Aorta (tissue), 5 donors: ENCODE measurements at regions of chr22 and their contacts with region 1.

Region 1: GRCh38 chr22:28373831-28374230 is 305.8 kb downstream of the TTC28 start:
- DNase-seq: no peak
- ATAC-seq: no peak
- H3K4me3 ChIP-seq: no peak overlapping the region
- H3K27ac ChIP-seq: no peak overlapping the region
- H3K4me1 ChIP-seq: peaks cover 0 to 3% of the 10 kb centered on the region in 2 donors
- H3K27me3 ChIP-seq: no peaks in the 10 kb centered on the region

Region 2: GRCh38 chr22:28435140-28435768 is 61.4 kb after region 1 on chr22:
- intact Hi-C with region 1: loop called (anchors 5 to 10 kb)
- DNase-seq: peak in 1 of 2 donors; percentile 45
- ATAC-seq: no peak
- H3K4me3 ChIP-seq: no peak overlapping the region
- H3K27ac ChIP-seq: no peak overlapping the region
- H3K4me1 ChIP-seq: peaks cover 2 to 6% of the 10 kb centered on the region in 2 donors
- H3K27me3 ChIP-seq: no peaks in the 10 kb centered on the region